IMR-90 (cell line): ENCODE measurements at regions of chr11 and their contacts with region 1.

Region 1: GRCh38 chr11:8911029-8911826 is at the start of gene AKIP1:
- DNase-seq: peak; percentile 94
- ATAC-seq: peak; percentile 92
- H3K4me3 ChIP-seq: peak within 1 kb of the TSS; percentile 91
- H3K27ac ChIP-seq: peak within 1 kb of the TSS; percentile 97
- H3K4me1 ChIP-seq: peaks cover 11% of the 10 kb centered on the region
- H3K27me3 ChIP-seq: no peaks in the 10 kb centered on the region
- CTCF ChIP-seq: no peak
- POLR2A ChIP-seq: 0 out of 2 replicates have a peak, but pooled peaks have one; percentile 24
- RAD21 ChIP-seq: 0 out of 2 replicates have a peak, but pooled peaks have one; percentile 3
- total RNA-seq, gene AKIP1: 27.8 and 33.9 TPM in 2 replicates

Region 2: GRCh38 chr11:8688414-8689362 is 222.5 kb before region 1 on chr11:
- CTCF ChIA-PET with region 1: no interaction called
- POLR2A ChIA-PET with region 1: no interaction called
- dilution Hi-C with region 1: no loop called
- in situ Hi-C with region 1: no loop called
- intact Hi-C with region 1: loop called (anchors 2 kb)
- DNase-seq: peak; percentile 96
- ATAC-seq: peak; percentile 89
- H3K4me3 ChIP-seq: peak overlapping the region; percentile 52
- H3K27ac ChIP-seq: peak overlapping the region; percentile 77
- H3K4me1 ChIP-seq: peaks cover 7% of the 10 kb centered on the region
- H3K27me3 ChIP-seq: no peaks in the 10 kb centered on the region
- CTCF ChIP-seq: peak; percentile 20; the same call in 1 of the 2 replicates
- POLR2A ChIP-seq: peak; percentile 80
- RAD21 ChIP-seq: peak; percentile 40

Region 3: DNA sequence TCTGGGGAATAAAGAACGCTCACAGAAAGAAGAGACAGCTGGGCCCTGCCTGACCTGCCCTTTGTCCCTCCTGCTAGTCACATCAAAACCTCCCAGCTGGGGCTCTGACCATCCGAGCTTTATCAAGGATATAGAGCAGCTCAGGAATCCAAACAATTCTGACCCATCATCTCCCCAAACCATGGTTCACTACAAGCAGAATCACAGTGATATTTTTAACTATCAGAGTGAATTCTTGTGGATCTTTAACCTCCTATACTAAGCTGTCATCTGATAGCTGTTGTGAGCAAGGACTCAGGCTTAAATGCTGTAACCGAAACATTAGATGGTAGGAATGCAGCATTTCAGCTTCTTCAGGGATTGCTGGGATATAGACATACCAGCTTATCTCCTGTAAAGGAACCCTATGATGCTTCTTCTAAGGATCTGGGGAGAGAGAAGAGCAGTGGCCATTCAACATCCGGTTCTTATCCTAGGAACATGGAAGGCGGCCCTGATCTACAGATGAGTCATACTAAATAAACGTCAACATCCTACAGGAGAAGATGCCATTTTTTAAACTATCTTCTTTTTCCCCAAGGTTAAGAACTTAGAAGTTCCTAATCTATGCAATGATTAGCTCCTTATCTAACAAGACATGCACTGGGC is 85.0 kb before region 1 on chr11:
- CTCF ChIA-PET with region 1: no interaction called
- POLR2A ChIA-PET with region 1: no interaction called
- dilution Hi-C with region 1: no loop called
- in situ Hi-C with region 1: no loop called
- intact Hi-C with region 1: loop called (anchors 5 kb)
- DNase-seq: peak; percentile 95
- ATAC-seq: peak; percentile 90
- H3K4me3 ChIP-seq: no peak overlapping the region
- H3K27ac ChIP-seq: peak overlapping the region; percentile 91
- H3K4me1 ChIP-seq: peaks cover 16% of the 10 kb centered on the region
- H3K27me3 ChIP-seq: no peaks in the 10 kb centered on the region
- CTCF ChIP-seq: no peak
- POLR2A ChIP-seq: no peak
- RAD21 ChIP-seq: no peak

Region 4: GRCh38 chr11:8870411-8871170 is 40.6 kb before region 1 on chr11:
- CTCF ChIA-PET with region 1: interaction called, 5 read pairs
- POLR2A ChIA-PET with region 1: interaction called, 3 read pairs
- dilution Hi-C with region 1: no loop called
- in situ Hi-C with region 1: no loop called
- intact Hi-C with region 1: loop called (anchors 5 kb)
- DNase-seq: peak; percentile 75
- ATAC-seq: peak; percentile 79
- H3K4me3 ChIP-seq: peak overlapping the region; percentile 51
- H3K27ac ChIP-seq: peak overlapping the region; percentile 78
- H3K4me1 ChIP-seq: peaks cover 12% of the 10 kb centered on the region
- H3K27me3 ChIP-seq: no peaks in the 10 kb centered on the region
- CTCF ChIP-seq: no peak
- POLR2A ChIP-seq: no peak
- RAD21 ChIP-seq: no peak

Region 5: DNA sequence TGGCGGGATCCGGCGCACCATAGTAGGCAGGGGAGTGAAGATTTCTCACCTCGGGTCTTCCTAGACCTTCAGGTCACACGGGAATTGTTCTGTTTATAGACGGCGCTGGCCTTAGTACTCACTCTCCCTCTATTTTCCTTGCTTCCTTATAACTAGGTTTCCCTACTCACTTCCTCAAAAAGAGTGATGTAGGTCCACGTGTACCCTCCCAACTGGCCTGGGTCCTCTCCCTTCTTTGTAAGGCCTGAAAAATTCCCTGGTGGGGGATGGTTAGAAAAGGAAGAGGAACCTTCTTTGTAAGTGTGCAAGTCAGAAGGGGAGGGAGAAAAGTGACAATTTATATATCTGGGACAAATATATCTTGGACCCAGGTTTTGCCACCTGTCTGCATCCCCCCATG is 56.0 kb after region 1 on chr11:
- CTCF ChIA-PET with region 1: no interaction called
- POLR2A ChIA-PET with region 1: no interaction called
- dilution Hi-C with region 1: no loop called
- in situ Hi-C with region 1: no loop called
- intact Hi-C with region 1: no loop called
- DNase-seq: no peak
- ATAC-seq: no peak
- H3K4me3 ChIP-seq: no peak overlapping the region
- H3K27ac ChIP-seq: no peak overlapping the region
- H3K4me1 ChIP-seq: peaks cover 6% of the 10 kb centered on the region
- H3K27me3 ChIP-seq: no peaks in the 10 kb centered on the region
- CTCF ChIP-seq: no peak
- POLR2A ChIP-seq: no peak
- RAD21 ChIP-seq: no peak

Region 6: DNA sequence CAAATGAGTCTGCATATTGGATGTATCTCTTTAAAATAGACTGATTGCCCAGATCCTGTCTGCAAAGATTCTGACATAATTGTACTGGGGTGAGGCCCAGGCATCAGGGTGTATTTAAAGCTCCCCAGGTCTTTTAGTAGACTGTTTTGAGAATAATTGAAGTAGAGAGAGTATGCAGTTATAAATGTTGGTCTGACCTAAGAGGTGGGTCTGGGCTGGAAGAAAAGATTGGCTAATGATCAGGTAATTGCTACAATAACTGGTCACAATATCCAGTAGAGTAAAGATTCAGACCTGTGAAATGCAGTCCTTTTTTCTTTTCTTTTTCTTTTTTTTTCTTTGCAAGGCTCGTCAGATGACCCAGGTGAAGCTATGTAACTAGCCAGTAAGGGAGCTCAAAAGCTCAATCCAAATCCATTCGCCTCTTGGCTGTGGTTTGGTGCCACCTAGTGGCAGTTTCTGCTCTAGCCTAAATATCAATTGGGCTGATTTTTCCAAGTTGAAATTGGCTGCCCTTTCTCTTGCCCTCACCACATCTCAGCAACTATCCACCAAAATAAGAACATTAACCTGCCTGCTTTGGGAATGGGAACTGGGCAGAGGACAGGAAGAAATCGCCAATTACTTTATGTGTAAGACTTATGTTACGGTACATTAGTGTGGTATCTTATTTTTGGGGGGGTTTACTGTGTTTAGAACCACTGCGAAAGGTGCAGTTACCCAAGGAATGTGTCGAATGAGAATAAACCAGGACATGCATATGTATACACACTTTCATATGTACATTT is 595.5 kb after region 1 on chr11:
- CTCF ChIA-PET with region 1: no interaction called
- POLR2A ChIA-PET with region 1: no interaction called
- dilution Hi-C with region 1: no loop called
- in situ Hi-C with region 1: no loop called
- intact Hi-C with region 1: loop called (anchors 5 kb)
- DNase-seq: peak; percentile 81
- ATAC-seq: peak; percentile 90
- H3K4me3 ChIP-seq: no peak overlapping the region
- H3K27ac ChIP-seq: no peak overlapping the region
- H3K4me1 ChIP-seq: peaks cover 4% of the 10 kb centered on the region
- H3K27me3 ChIP-seq: no peaks in the 10 kb centered on the region
- CTCF ChIP-seq: peak; percentile 95
- POLR2A ChIP-seq: no peak
- RAD21 ChIP-seq: peak; percentile 95